ENCODE measurements at regions of chr2 and their contacts with region 1.

Region 1: DNA sequence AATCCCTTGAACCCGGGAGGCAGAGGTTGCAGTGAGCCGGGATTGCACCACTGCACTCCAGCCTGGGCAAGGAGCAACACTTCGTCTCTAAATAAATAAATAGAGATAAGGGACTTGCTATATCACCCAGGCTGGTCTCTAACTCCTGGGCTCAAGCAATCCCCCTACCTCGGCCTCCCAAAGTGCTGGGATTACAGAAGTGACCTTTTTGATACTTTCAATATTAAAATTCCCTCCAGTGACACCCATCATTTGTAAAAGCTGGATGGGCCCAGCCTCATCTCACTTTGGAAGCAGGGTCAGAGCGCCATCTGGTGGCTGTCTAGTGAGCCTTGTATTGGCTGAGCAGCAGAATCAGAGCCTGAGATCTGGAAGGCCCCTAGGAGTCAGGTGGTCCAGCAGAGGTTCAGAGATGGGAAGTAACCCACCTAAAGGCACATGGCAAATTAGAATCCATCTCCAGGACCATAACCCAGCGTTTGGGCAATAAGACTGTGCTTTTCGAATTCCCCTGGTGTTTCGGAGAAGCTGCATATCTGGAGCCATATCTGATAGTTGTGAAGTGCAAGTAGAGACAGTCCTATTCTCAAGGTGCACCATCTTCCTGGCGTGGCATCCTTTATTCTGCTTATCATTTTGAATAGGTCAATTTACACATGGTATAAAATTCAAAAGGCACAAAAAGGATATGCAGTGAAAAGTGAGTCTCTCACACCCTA is 18.3 kb upstream of the SLC35F6 start:
- DNase-seq: peak; percentile 82 to 89
- ATAC-seq: peak; percentile 83 to 96 (median 88)
- H3K4me3 ChIP-seq: no peak overlapping the region
- H3K27ac ChIP-seq: no peak overlapping the region
- H3K4me1 ChIP-seq: no peaks in the 10 kb centered on the region
- H3K27me3 ChIP-seq: no peaks in the 10 kb centered on the region
- CTCF ChIP-seq: peak; percentile 93

Region 2: GRCh38 chr2:26605195-26605998 is 140.4 kb before region 1 on chr2:
- intact Hi-C with region 1: loop called (anchors 1 kb)
- DNase-seq: no peak
- ATAC-seq: peak; percentile 57 to 82 (median 73)
- H3K4me3 ChIP-seq: no peak overlapping the region
- H3K27ac ChIP-seq: no peak overlapping the region
- H3K4me1 ChIP-seq: no peaks in the 10 kb centered on the region
- H3K27me3 ChIP-seq: peaks cover 0 to 26% (median 0%) of the 10 kb centered on the region in 3 donors
- CTCF ChIP-seq: peak; percentile 81